Left colon (tissue), 2 donors: ENCODE measurements at regions of chr16 and their contacts with region 1.

Region 1: DNA sequence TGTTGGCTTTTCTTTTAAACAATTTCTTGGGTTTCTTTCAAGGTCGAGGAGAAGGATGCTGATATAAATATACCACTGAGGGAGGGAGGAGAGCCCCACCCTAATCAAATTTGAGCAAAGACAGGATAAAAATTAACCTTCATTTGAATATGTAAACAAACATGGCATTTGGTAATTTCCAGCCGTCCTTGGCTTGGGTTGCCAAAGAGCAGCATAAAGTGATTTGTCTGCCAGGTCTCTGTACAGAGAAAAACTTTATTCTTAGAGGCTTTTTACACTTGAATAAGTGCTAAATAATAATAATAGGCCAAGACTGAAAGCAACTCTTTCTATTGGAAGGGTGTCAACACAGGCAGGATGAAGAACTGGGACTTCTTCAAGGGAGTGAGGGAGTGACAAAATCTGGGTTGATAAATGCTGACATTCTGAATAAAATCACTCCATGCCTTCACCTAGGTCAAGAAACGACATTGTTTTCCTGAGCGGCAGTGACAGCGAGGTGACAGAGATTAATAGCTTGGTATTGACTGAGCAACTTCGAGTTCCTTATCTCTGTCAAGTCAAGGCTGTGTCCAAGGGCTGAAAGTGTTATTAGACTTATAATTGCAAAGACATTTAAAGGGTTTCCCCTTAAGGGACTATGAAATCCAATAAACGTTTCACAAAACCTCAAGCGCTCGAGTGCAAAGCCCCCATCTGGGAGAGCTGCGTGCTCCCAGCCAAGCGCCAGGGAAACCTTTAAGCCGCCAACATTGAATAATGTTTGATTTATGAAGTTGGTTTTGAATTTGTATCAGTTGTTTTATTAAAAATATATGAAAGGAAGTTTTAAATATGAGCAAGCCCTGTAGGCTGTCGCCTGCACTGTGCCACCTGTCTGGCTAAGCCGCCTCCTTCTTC is 269.5 kb upstream of the N4BP1 start:
- DNase-seq: no peak
- ATAC-seq: no peak

Region 2: GRCh38 chr16:48810803-48811453 is 68.5 kb before region 1 on chr16:
- intact Hi-C with region 1: loop called in 1 of 2 experiments (anchors 10 kb)
- DNase-seq: no peak
- ATAC-seq: no peak

Region 3: GRCh38 chr16:49067776-49068175 is 188.3 kb after region 1 on chr16:
- intact Hi-C with region 1: no loop called
- DNase-seq: no peak
- ATAC-seq: no peak

Region 4: GRCh38 chr16:49275050-49275730 is 395.7 kb after region 1 on chr16:
- intact Hi-C with region 1: no loop called
- DNase-seq: no peak
- ATAC-seq: no peak